Activated CD4-positive, alpha-beta memory T cell treated with anti-CD3 and anti-CD28 coated beads, Interleukin-2, amount 10 ng/mL, durations not matched to agents 7 days and 5 days (primary cell): ENCODE measurements at regions of chr21 and their contacts with region 1.

Region 1: DNA sequence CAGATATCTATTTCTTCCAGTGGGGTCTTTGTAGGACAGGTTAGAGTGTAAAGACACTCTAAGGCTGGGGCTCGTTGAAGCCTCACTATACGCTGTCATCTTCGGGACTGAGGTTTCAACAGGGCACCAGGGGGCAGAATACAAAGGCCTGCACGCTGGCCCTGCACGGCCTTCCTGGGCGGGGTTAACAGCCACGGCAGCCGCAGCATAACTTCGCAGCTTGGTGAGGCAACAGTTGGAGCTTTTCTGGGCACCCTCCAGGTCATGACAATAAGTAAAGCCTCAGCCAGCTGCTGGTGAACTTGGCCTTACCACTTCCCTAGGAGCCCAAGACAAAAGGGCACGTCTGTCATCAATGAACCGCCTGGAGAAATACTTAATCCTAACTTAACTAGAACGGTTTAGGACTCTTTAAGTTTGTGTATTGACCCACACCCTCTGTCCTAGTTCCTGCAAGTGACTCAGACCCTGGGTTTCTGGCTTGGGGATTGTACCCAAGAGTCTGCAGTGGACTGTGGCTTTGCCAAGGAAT is 2.3 kb upstream of the RUNX1 start:
- DNase-seq: peak; percentile 89
- H3K4me3 Mint-ChIP-seq: peak overlapping the region; percentile 24
- H3K27ac Mint-ChIP-seq: peak overlapping the region; percentile 99
- H3K4me1 Mint-ChIP-seq: peaks cover 37% of the 10 kb centered on the region
- H3K27me3 Mint-ChIP-seq: peaks cover 1% of the 10 kb centered on the region

Region 2: GRCh38 chr21:33901412-33902288 is 1149.7 kb before region 1 on chr21:
- CTCF ChIA-PET with region 1: no interaction called
- POLR2A ChIA-PET with region 1: no interaction called
- DNase-seq: no peak
- H3K4me3 Mint-ChIP-seq: no peak overlapping the region
- H3K27ac Mint-ChIP-seq: peak overlapping the region; percentile 52
- H3K4me1 Mint-ChIP-seq: peaks cover 24% of the 10 kb centered on the region
- H3K27me3 Mint-ChIP-seq: no peaks in the 10 kb centered on the region

Region 3: DNA sequence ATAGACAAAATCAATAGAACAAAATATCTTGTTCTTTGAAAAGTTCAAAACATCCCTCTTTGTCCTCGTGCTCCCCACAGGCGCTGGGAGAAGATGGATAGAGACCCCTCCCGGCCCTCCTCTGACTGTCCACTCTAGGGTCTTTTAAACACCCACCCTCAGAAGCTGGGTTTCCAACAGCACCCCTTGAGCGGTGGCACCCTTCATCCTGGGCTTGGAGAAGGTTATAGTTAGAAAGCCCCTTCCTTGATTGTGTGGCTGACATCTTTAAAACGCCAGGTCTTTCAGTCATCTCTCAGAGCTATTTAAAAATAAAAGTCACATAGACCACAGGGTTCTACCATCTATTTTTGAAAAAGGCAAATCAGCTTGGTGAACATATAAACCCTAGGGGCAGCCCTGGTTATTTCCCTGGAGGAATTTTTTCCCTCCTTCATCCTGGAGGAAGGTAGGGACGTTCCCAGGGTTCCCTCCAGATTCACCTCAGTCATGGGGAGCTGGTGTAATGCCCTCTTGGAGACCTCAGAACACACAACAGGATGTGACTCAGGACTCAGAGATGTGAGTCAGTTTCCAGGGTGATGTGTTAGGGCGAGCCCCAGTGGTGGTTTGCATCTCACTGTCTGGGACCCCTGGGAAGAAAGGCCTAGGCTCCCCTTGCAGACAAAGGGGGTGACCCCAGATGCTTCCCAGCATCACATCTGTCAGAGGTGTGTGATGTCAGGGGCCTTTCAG is 244.0 kb before region 1 on chr21:
- CTCF ChIA-PET with region 1: interaction called, 4 read pairs
- POLR2A ChIA-PET with region 1: interaction called, 24 read pairs
- DNase-seq: peak; percentile 72
- H3K4me3 Mint-ChIP-seq: peak overlapping the region; percentile 4
- H3K27ac Mint-ChIP-seq: peak overlapping the region; percentile 87
- H3K4me1 Mint-ChIP-seq: peaks cover 88% of the 10 kb centered on the region
- H3K27me3 Mint-ChIP-seq: no peaks in the 10 kb centered on the region

Region 4: GRCh38 chr21:34946916-34947534 is 104.3 kb before region 1 on chr21:
- CTCF ChIA-PET with region 1: interaction called, 3 read pairs
- POLR2A ChIA-PET with region 1: interaction called, 13 read pairs
- DNase-seq: no peak
- H3K4me3 Mint-ChIP-seq: no peak overlapping the region
- H3K27ac Mint-ChIP-seq: no peak overlapping the region
- H3K4me1 Mint-ChIP-seq: peaks cover 77% of the 10 kb centered on the region
- H3K27me3 Mint-ChIP-seq: no peaks in the 10 kb centered on the region

Region 5: DNA sequence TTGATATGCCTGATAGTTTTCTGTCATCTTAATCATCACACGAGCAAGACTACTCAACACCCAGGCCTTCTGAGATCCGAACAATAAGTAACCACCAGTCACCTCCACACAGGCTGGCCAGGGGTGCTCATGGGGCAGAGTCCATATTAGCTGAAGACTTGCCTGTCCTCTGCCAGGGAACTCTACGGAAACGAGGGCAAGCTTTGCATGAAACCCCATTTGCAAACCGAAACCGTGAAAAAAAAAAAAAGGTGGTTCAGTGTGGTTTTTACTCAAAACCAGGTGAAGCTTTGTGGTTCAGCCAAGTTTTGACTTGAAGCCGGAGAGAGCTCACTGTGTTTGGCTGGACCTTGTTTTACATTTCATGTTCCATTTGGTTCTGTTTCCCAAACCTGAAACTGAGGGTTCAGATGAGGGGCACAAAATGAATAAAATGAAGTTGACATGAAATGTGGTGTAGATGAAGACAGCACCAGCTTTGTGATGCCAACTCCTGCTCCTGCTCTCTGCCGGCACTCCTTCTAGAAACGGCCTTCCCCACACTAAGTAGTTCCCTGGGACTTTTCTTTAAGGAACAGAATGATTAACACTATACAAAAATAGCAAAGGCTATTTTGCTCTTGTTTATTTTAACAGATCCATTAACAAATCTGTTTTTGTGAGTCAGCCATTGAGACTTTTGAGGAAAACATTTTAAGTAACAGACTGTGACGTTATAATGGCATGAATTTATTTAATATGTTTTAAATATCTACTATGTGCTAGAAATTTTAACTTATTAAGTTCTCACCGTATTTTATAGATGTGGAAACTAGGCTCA is 77.0 kb before region 1 on chr21:
- CTCF ChIA-PET with region 1: interaction called, 11 read pairs
- POLR2A ChIA-PET with region 1: interaction called, 57 read pairs
- DNase-seq: peak; percentile 64
- H3K4me3 Mint-ChIP-seq: peak overlapping the region; percentile 60
- H3K27ac Mint-ChIP-seq: peak overlapping the region; percentile 80
- H3K4me1 Mint-ChIP-seq: peaks cover 78% of the 10 kb centered on the region
- H3K27me3 Mint-ChIP-seq: peaks cover 9% of the 10 kb centered on the region

Region 6: GRCh38 chr21:35026617-35027562 is 24.5 kb before region 1 on chr21:
- CTCF ChIA-PET with region 1: interaction called, 31 read pairs
- POLR2A ChIA-PET with region 1: interaction called, 428 read pairs
- DNase-seq: peak; percentile 91
- H3K4me3 Mint-ChIP-seq: peak overlapping the region; percentile 69
- H3K27ac Mint-ChIP-seq: peak overlapping the region; percentile 98
- H3K4me1 Mint-ChIP-seq: peaks cover 82% of the 10 kb centered on the region
- H3K27me3 Mint-ChIP-seq: no peaks in the 10 kb centered on the region

Region 7: DNA sequence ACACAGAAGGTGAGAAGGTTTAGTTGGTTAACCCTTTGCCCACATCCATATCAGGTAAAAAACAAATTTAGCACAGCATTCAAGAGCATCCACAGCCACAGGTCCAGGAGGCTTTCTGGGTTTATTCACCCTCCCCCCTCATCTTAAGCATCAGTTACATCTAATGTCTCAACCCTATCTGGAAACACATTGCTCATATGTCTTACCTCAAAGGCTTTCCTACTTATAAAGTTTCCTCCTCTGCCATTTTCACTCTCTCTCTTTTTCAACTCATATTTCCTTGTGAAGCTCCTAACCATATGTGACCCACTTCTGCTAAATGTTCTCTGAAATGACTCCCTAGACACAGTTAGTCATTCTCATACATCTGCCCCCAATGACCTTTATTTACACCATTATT is 45.6 kb after region 1 on chr21:
- CTCF ChIA-PET with region 1: interaction called, 6 read pairs
- POLR2A ChIA-PET with region 1: interaction called, 10 read pairs
- DNase-seq: no peak
- H3K4me3 Mint-ChIP-seq: no peak overlapping the region
- H3K27ac Mint-ChIP-seq: no peak overlapping the region
- H3K4me1 Mint-ChIP-seq: peaks cover 28% of the 10 kb centered on the region
- H3K27me3 Mint-ChIP-seq: no peaks in the 10 kb centered on the region

Region 8: DNA sequence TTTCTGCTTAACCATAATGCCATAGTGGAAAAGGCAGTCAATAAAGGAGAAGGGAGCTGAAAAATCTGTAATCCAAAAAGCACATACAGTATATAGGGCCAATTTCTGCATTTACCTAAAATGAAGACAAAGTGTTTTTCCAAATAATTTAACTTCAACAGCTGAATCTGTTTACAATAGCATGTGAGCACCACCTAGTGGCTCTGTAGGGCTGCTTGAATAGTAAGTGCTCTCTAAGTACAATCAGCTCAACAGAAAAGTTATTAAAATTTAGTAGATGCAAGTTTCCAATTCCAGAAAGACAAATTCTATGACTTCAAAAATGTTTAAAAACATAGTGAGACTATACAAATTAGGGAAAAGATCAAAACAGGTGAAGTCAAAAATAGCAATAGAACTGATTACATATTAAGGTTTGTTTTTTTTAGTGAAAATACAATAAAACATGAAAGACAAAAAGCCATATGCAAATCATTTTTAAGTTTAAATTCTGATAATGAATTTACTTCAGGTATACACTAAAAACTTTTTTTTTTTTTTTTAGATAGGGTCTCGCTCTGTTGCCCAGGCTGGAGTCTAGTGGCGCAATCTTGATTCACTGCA is 788.9 kb after region 1 on chr21:
- CTCF ChIA-PET with region 1: interaction called, 13 read pairs
- POLR2A ChIA-PET with region 1: no interaction called
- DNase-seq: peak; percentile 52
- H3K4me3 Mint-ChIP-seq: no peak overlapping the region
- H3K27ac Mint-ChIP-seq: no peak overlapping the region
- H3K4me1 Mint-ChIP-seq: no peaks in the 10 kb centered on the region
- H3K27me3 Mint-ChIP-seq: peaks cover 13% of the 10 kb centered on the region